Dorsolateral prefrontal cortex (tissue), 120 donors: ENCODE measurements at regions of chr1 and their contacts with region 1.

Region 1: GRCh38 chr1:2545759-2546514 is 10.2 kb upstream of the TNFRSF14 start:
- DNase-seq: peak in 9 of 10 donors; percentile 39 to 86 (median 76)
- H3K4me3 ChIP-seq: peak overlapping the region; percentile 25 to 69 (median 56)
- H3K27ac ChIP-seq: peak overlapping the region in 56 of 59 donors; percentile 29 to 99 (median 96)
- H3K27me3 ChIP-seq: peaks cover 0 to 7% (median 0%) of the 10 kb centered on the region in 45 donors
- CTCF ChIP-seq: peak in 1 of 56 donors; percentile 3

Region 2: DNA sequence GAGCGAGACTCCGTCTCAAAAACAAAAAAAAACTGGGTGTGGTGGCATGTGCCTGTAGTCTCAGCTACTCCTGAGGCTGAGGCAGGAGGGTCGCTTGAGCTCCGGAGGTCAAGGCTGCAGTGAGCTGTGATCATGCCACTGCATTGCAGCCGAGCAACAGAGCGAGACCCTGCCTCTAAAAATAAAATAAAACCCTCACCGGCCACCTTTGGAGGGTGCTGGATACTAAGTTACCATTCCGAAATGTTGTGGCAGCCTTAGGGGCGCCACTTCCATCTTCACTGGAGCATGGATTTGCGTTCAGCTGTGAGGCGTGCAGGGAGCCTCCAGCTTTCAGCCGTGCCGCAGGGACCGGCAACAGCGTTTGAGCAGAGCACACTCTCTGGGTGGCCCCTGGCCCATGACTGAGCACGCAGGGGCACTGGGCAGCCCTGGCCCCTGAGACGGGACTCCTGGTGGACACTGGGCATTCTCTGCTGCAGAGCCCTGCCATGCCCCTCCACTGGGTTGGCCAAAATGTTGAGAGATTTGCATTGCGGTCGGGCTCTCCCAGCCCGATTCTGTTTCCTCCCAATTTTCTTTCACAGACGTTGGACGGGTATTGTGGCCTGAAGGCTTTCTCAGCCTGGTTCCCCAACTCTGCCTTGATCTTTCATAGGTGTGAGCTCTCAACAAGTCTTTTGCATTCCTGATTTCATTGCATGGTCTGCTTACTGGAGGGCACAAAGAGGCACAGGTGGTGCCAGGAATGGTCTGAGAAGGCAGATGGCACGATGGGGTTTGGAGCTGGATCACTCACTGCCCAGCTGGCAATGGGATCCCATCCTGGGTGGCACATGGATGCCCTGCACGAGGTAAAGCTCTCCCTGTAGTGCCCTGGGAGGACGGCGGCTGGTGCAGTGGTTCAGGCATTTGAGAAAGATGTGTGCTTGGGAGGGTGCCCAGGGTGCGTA is 536.6 kb before region 1 on chr1:
- intact Hi-C with region 1: no loop called
- DNase-seq: peak in 1 of 10 donors; percentile 81
- H3K4me3 ChIP-seq: no peak overlapping the region
- H3K27ac ChIP-seq: peak overlapping the region in 1 of 59 donors; percentile 87
- H3K27me3 ChIP-seq: peaks cover 0 to 9% (median 0%) of the 10 kb centered on the region in 45 donors
- CTCF ChIP-seq: no peak

Region 3: GRCh38 chr1:2405588-2406295 is 140.2 kb before region 1 on chr1:
- intact Hi-C with region 1: no loop called
- DNase-seq: no peak
- H3K4me3 ChIP-seq: no peak overlapping the region
- H3K27ac ChIP-seq: peak overlapping the region in 1 of 59 donors; percentile 18
- H3K27me3 ChIP-seq: no peaks in the 10 kb centered on the region
- CTCF ChIP-seq: no peak

Region 4: GRCh38 chr1:2443277-2444137 is 102.4 kb before region 1 on chr1:
- intact Hi-C with region 1: loop called (anchors 5 kb)
- DNase-seq: peak; percentile 53 to 88 (median 72)
- H3K4me3 ChIP-seq: peak overlapping the region; percentile 26 to 74 (median 59)
- H3K27ac ChIP-seq: peak overlapping the region; percentile 6 to 99 (median 96)
- H3K27me3 ChIP-seq: peaks cover 0 to 15% (median 0%) of the 10 kb centered on the region in 45 donors
- CTCF ChIP-seq: peak in 51 of 56 donors; percentile 20 to 68 (median 48)

Region 5: GRCh38 chr1:2459757-2460156 is 86.2 kb before region 1 on chr1:
- intact Hi-C with region 1: loop called in 1 of 2 experiments (anchors 2 kb)
- DNase-seq: peak; percentile 71 to 89 (median 80)
- H3K4me3 ChIP-seq: peak overlapping the region in 1 of 59 donors; percentile 4
- H3K27ac ChIP-seq: peak overlapping the region in 52 of 59 donors; percentile 7 to 87 (median 71)
- H3K27me3 ChIP-seq: peaks cover 0 to 8% (median 0%) of the 10 kb centered on the region in 45 donors
- CTCF ChIP-seq: peak in 53 of 56 donors; percentile 21 to 75 (median 56)

Region 6: DNA sequence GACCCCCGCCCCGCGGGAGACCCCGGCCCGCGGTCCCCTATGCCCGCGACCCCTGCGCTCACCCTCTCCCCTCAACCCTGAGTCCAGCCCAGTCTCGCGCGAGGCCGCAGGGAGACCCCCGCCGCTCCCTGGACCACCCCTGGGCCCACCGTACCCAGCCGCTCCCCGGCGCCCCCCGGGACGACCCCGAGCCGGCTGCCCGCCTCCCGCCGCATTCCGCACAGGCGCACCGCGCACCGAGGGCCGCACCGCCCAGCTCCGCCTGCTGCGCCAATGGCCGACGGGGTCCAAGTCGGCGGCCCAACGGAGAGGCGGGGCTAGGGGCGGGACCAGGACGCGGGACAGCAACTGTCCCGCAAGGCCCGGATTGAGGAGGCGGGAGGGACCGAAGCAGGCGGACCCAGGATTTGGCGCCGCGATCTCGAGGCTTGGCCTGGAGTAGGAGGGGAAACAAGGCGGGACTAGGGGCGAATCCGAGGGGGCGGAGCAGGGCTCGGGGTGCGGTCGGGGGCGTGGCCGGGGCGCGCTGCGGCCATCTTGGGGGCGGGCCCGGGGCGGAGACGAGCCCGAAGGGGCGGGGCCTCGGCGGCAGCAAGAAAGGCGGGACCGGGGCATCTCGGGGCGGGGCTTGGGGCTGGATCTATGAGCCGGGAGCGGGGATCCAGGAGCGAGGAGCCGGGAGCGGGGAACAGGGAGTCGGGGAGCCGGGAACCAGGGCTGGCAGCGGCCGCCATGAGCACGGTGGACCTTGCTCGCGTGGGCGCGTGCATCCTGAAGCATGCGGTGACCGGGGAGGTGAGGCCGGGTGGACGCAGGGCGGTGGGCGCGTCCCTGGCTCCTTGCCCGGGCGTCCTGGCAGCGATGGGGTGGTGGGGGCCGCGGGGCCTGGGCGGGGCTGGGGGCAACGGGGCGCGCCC is 40.5 kb after region 1 on chr1 and contains the start of gene PRXL2B:
- intact Hi-C with region 1: loop called (anchors 2 to 5 kb)
- DNase-seq: peak; percentile 97 to 99 (median 99)
- H3K4me3 ChIP-seq: peak within 1 kb of the TSS; percentile 67 to 95 (median 85)
- H3K27ac ChIP-seq: peak within 1 kb of the TSS; percentile 55 to 99 (median 94)
- H3K27me3 ChIP-seq: no peaks in the 10 kb centered on the region
- CTCF ChIP-seq: peak in 8 of 56 donors; percentile 5 to 26 (median 12)
- total RNA-seq, gene PRXL2B: 24.0 to 76.4 (median 50.5) TPM